HEK293 (cell line): ENCODE measurements at regions of chr6 and their contacts with region 1.

Region 1: DNA sequence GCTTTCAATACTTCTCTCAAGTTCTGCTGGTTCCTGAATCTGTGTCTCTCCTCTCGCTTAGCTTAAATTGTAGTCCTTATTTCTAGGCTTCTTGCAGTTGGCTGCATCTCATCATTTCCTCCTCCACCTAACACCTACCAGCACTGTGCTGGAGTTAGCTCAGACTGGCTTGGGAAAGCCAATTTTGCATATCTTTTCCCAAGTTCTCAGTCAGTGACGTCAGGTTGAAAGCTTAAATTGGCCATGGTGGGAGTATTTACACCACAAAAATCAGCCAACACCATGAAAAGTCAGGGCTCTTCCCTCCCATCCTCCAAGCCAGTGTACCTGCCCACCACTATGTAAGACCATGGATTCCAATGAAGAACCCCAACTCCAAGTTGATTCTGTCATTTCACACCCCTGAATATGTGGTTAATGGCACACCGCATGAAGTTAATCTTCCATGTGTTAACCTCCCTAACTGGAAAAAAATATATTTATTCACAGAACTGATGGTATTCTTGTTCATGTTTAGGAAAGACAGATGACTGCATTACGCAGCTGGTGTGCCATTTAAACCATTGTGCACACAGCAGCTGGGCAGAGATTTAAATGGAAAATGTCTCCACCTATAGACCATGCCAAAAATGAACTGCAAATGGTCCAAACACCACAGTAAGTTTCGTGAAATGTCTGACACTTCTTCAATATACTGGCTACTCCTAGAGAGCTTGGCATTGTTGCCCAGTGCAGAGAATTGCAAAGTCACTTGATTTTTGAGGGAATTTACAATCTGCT is 274.1 kb upstream of the MAP3K7 start:
- H3K4me3 ChIP-seq: no peak overlapping the region
- H3K27ac ChIP-seq: no peak overlapping the region
- H3K4me1 ChIP-seq: no peaks in the 10 kb centered on the region
- CTCF ChIP-seq: no peak

Region 2: GRCh38 chr6:90610751-90611542 is 250.1 kb before region 1 on chr6:
- CTCF ChIA-PET with region 1: interaction called, 11 read pairs
- POLR2A ChIA-PET with region 1: no interaction called
- H3K4me3 ChIP-seq: peak overlapping the region; percentile 62
- H3K27ac ChIP-seq: peak overlapping the region; percentile 93
- H3K4me1 ChIP-seq: peaks cover 6% of the 10 kb centered on the region
- CTCF ChIP-seq: peak; percentile 88

Region 3: DNA sequence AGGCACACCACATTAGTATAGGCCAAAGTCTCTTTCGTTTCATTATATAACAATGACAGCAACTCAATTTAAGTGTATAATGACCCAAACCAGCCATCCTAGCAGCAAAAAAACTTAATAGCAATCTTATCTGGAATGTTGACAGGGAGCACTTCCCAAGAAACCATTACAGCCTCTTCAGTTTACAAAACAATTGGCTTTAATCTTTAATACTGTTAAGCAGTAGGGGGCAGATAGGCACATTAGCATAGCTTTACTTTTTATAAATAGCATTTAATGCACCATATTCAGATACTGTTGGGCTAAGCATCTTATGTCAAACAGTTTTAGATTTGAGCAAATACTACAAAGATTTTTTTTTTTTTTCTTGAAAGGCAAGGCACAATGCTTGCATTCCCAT is 80.9 kb before region 1 on chr6:
- CTCF ChIA-PET with region 1: interaction called, 12 read pairs
- POLR2A ChIA-PET with region 1: no interaction called
- H3K4me3 ChIP-seq: no peak overlapping the region
- H3K27ac ChIP-seq: no peak overlapping the region
- H3K4me1 ChIP-seq: no peaks in the 10 kb centered on the region
- CTCF ChIP-seq: no peak

Region 4: GRCh38 chr6:91196729-91197128 is 335.7 kb after region 1 on chr6:
- CTCF ChIA-PET with region 1: no interaction called
- POLR2A ChIA-PET with region 1: no interaction called
- H3K4me3 ChIP-seq: no peak overlapping the region
- H3K27ac ChIP-seq: no peak overlapping the region
- H3K4me1 ChIP-seq: no peaks in the 10 kb centered on the region
- CTCF ChIP-seq: no peak